Right ventricle myocardium inferior (tissue), 1 donor: ENCODE measurements at regions of chr12 and their contacts with region 1.

Region 1: DNA sequence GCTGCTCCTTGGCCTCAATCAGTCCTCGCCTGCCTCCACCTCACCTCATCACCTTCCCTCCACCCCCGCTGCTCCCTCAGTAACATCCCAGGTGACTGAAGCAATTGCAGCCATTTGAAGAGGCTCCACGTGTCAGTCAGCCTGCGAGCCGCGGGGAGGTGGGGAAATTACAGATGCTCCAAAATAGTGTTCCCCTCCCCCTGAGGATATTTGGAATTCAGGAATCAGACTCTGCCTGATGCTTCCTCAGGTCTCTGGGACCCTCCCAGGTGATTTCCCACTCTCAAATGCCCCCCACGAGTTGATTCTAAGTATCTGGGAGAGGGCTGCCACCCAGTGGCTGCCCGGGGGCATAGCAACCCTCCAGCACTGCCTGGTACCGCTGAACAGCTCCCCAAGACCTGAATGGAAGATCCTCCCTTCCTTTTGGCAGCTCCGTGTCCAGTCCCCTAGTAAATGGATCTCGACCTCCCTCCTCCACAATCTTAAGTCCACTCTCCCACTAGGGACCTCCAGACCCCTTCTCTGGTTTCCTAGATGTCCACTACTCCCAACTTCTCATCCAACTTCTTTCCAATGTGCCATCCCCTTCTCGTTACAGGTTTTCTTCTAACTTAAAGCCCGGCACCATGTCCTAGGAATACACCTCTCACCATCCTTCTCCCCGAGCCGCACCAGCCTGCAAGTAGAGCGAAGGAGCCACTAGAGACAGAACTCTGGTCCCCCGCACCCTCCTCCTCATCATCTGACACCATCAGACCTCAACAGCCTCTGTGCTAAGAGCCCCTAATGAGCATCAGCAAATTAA is 1.4 kb upstream of the ASIC1 start:
- DNase-seq: no peak
- ATAC-seq: peak; percentile 45

Region 2: DNA sequence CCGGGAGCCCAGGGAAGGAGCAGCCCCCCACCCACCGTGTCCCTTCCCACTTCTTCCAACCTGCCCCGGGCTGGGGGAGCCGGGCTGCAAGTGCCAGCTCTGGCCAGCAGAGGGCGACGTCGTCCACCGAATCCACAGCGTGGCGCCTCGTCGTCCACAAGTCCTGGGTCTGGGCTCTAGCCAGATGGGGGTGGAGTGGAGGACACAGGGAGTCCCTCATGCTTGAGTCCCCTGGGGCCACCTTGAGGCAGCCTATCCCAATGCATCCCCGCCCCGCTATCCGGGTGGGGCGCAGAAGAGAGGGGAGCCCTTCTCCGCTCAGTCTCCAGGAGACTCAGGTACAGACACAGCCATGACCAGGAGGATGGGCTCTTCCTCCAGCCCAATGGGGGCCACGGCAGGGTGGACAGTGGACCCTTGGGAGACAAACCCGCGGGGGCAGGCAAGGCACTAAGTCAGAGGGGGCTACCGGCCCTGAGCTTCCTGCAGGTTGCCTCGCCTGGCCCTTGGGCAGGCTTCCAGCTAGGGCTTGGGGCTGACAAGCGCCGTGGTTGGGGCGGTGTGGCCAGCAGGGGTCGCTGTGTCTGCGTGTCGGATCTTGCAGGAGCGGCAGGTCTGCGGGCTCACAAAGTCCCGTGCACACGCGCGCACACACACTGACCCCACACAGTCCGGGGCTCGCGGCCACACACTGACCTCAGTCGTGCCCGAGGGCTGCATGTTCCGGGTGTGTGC is 88.8 kb before region 1 on chr12:
- intact Hi-C with region 1: loop called (anchors 1 kb)
- DNase-seq: peak; percentile 96
- ATAC-seq: peak; percentile 82

Region 3: DNA sequence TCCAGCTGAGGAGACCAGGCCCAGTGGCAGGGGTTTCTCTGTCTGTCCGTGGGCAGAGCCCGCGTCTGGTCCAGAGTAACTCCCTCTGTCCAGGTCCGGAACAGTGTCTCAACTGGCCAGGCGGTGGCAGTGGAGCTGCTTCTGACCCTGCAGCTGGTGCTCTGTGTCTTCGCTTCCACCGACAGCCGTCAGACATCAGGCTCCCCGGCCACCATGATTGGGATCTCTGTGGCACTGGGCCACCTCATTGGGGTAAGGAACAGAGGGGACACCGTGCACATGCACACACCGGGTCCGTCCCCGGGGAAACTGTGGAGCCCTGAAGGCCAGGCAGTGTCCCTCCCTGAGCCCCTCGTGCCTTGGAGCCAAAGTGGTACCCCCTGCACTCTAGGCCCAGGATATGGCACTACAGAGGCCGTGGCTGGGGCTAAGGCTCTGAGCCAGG is 81.8 kb before region 1 on chr12:
- intact Hi-C with region 1: loop called (anchors 2 kb)
- DNase-seq: peak; percentile 78
- ATAC-seq: peak; percentile 87

Region 4: DNA sequence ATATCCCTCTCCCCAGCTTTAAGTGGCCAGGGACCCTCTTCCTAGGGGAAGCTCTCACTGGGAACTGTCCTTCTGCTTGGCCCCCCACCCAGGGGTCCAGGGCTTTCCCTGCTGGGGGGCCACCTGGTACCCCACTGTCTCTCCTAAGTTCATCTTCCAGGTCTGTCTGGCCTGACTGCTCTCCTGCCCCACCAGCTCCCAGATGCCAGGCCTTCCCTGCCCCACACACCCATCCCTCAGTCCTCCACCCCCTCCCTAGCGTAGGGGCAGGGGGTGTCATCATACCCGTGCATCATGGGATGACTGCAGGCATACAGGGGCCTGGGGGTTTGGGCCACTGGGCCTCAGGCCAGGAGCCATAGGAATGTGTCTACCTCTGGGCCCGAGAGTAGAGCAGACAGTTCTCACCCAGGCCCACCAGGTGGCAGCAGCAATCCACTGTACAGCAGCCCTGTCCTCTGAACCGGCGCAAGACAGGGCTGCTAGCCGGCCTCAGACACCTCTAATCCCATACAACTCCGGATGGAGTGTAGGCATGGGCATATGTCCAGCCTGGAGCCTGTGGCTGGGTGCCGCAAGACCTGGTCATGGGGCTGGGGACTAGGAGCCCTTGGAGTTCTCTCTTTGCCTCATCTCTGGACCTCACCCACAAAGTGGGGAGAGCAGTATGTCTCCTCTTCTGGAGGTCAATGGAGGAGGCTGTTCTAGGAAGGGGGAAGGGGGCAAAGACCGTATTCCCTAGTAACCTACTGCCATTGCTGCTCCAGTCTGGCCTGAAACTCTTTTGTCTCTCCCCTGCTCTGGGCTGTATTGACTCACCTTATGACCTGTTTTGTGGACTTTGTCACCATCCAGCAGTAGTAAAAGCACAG is 19.1 kb after region 1 on chr12:
- intact Hi-C with region 1: no loop called
- DNase-seq: peak; percentile 90
- ATAC-seq: peak; percentile 89